ENCODE measurements at regions of chr2 and their contacts with region 1.

Region 1: DNA sequence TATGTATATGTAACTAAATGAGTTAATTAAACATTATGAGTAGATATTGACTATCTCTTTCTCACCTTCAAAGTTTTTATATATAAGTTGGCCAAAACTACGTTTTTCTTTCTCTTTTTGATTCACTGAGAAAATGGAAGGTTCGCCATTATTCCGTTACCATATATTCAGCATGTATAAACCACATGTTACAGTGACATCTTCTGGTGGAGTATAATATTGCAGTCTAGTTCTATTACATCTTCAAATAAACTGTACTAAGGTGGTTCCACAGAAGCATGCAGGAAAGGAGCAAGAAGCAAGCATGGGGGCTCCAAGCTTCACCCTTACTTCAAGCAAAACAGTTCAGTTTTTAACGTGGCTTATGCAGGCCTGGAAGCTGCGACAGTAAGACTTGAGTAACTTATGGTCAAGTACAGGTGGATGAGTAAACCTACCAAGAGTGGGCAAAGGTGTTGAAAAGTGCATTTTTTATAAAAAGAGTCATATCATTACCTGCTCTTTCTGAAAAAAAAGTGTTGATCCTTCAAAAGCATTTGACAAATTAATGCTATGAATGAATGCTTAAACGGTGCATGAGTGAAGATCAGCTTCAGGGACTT is 129.8 kb upstream of the RAB6C start:
- DNase-seq: peak; percentile 81
- ATAC-seq: peak; percentile 75
- H3K4me3 ChIP-seq: no peak overlapping the region
- H3K4me3 Mint-ChIP-seq: no peak overlapping the region
- H3K27ac ChIP-seq: no peak overlapping the region
- H3K27ac Mint-ChIP-seq: no peak overlapping the region
- H3K4me1 ChIP-seq: no peaks in the 10 kb centered on the region
- H3K4me1 Mint-ChIP-seq: peaks cover 2% of the 10 kb centered on the region
- H3K27me3 ChIP-seq: no peaks in the 10 kb centered on the region
- H3K27me3 Mint-ChIP-seq: peaks cover 23% of the 10 kb centered on the region
- CTCF ChIP-seq: peak; percentile 90

Region 2: GRCh38 chr2:128178650-128179460 is 1670.8 kb before region 1 on chr2:
- CTCF ChIA-PET with region 1: no interaction called
- POLR2A ChIA-PET with region 1: no interaction called
- intact Hi-C with region 1: loop called (anchors 10 kb)
- DNase-seq: peak; percentile 59
- ATAC-seq: peak; percentile 39
- H3K4me3 ChIP-seq: no peak overlapping the region
- H3K4me3 Mint-ChIP-seq: no peak overlapping the region
- H3K27ac ChIP-seq: no peak overlapping the region
- H3K27ac Mint-ChIP-seq: no peak overlapping the region
- H3K4me1 ChIP-seq: no peaks in the 10 kb centered on the region
- H3K4me1 Mint-ChIP-seq: no peaks in the 10 kb centered on the region
- H3K27me3 ChIP-seq: no peaks in the 10 kb centered on the region
- H3K27me3 Mint-ChIP-seq: no peaks in the 10 kb centered on the region
- CTCF ChIP-seq: peak; percentile 66

Region 3: GRCh38 chr2:128736689-128737545 is 1112.7 kb before region 1 on chr2:
- CTCF ChIA-PET with region 1: interaction called, 6 read pairs
- POLR2A ChIA-PET with region 1: no interaction called
- intact Hi-C with region 1: loop called (anchors 2 kb)
- DNase-seq: peak; percentile 79
- ATAC-seq: peak; percentile 75
- H3K4me3 ChIP-seq: peak overlapping the region in 4 of 5 experiments; percentile 26 to 50 (median 38)
- H3K4me3 Mint-ChIP-seq: peak overlapping the region; percentile 79
- H3K27ac ChIP-seq: no peak overlapping the region
- H3K27ac Mint-ChIP-seq: no peak overlapping the region
- H3K4me1 ChIP-seq: peaks cover 19 to 29% of the 10 kb centered on the region in 2 donors
- H3K4me1 Mint-ChIP-seq: peaks cover 20% of the 10 kb centered on the region
- H3K27me3 ChIP-seq: peaks cover 0 to 22% (median 4%) of the 10 kb centered on the region in 4 experiments
- H3K27me3 Mint-ChIP-seq: peaks cover 12% of the 10 kb centered on the region
- CTCF ChIP-seq: peak; percentile 99

Measured in B cell (primary cell).